ENCODE measurements at regions of chr17 and their contacts with region 1.

Region 1: GRCh38 chr17:35312790-35313711 is 60.4 kb downstream of the SLFN11 start:
- DNase-seq: peak; percentile 67 to 97 (median 76)
- ATAC-seq: peak; percentile 90
- H3K4me3 ChIP-seq: peak overlapping the region; percentile 77
- H3K4me3 Mint-ChIP-seq: peak overlapping the region; percentile 89
- H3K27ac ChIP-seq: peak overlapping the region; percentile 69 to 70
- H3K27ac Mint-ChIP-seq: peak overlapping the region; percentile 96
- H3K4me1 ChIP-seq: peaks cover 30% of the 10 kb centered on the region
- H3K4me1 Mint-ChIP-seq: peaks cover 67% of the 10 kb centered on the region
- H3K27me3 ChIP-seq: no peaks in the 10 kb centered on the region
- H3K27me3 Mint-ChIP-seq: no peaks in the 10 kb centered on the region
- CTCF ChIP-seq: peak; percentile 78

Region 2: GRCh38 chr17:34902831-34903547 is 410.1 kb before region 1 on chr17:
- CTCF ChIA-PET with region 1: no interaction called
- POLR2A ChIA-PET with region 1: no interaction called
- intact Hi-C with region 1: no loop called
- DNase-seq: no peak
- ATAC-seq: no peak
- H3K4me3 ChIP-seq: no peak overlapping the region
- H3K4me3 Mint-ChIP-seq: no peak overlapping the region
- H3K27ac ChIP-seq: no peak overlapping the region
- H3K27ac Mint-ChIP-seq: no peak overlapping the region
- H3K4me1 ChIP-seq: no peaks in the 10 kb centered on the region
- H3K4me1 Mint-ChIP-seq: no peaks in the 10 kb centered on the region
- H3K27me3 ChIP-seq: peaks cover 6 to 11% of the 10 kb centered on the region in 2 experiments
- H3K27me3 Mint-ChIP-seq: peaks cover 58% of the 10 kb centered on the region
- CTCF ChIP-seq: no peak

Region 3: DNA sequence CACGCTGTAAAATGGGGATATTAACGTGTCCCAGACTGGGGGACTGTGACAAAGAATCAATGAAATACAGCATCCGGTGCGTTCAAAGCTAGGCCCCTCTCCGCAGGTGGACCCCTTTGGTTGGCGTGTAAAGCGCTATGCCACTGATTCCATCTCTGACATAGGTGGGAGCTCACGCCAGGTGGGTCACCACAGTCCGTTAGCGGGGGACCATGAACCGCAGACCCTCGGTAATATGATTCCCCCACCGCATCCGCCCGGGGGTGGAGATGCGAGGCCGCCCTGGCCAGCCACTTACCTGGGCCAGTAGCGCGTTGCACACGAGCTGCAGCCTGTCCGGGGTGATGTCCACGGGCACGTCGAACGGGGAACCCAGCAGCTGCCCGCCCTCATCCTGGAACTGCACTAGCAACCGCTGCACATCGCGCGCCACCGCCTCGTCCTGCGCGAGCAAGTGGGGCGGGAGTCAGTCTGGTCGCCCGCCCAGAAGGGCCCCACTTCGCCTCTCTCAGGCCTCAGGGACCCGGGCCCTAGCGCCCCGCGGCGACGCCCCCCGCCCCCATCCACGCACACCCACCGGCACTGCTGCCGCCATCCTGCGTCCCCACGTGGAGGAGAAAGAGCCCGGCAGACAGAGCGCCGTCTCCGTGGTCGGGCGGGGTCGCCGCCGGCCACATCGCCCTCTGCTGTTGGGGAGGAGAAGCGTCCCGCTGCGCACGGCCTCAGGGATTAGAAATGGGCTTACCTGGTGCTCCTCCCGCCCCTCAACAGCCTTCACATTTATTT is 171.2 kb before region 1 on chr17 and contains the start of gene NLE1:
- CTCF ChIA-PET with region 1: no interaction called
- POLR2A ChIA-PET with region 1: no interaction called
- intact Hi-C with region 1: no loop called
- DNase-seq: peak; percentile 84 to 93 (median 88)
- ATAC-seq: peak; percentile 97
- H3K4me3 ChIP-seq: peak within 1 kb of the TSS; percentile 98
- H3K4me3 Mint-ChIP-seq: peak within 1 kb of the TSS; percentile 90
- H3K27ac ChIP-seq: peak within 1 kb of the TSS; percentile 13 to 64
- H3K27ac Mint-ChIP-seq: peak within 1 kb of the TSS; percentile 75
- H3K4me1 ChIP-seq: peaks cover 28% of the 10 kb centered on the region
- H3K4me1 Mint-ChIP-seq: peaks cover 17% of the 10 kb centered on the region
- H3K27me3 ChIP-seq: no peaks in the 10 kb centered on the region
- H3K27me3 Mint-ChIP-seq: no peaks in the 10 kb centered on the region
- CTCF ChIP-seq: peak; percentile 92
- total RNA-seq, gene NLE1: 8.9 to 9.5 TPM

Region 4: DNA sequence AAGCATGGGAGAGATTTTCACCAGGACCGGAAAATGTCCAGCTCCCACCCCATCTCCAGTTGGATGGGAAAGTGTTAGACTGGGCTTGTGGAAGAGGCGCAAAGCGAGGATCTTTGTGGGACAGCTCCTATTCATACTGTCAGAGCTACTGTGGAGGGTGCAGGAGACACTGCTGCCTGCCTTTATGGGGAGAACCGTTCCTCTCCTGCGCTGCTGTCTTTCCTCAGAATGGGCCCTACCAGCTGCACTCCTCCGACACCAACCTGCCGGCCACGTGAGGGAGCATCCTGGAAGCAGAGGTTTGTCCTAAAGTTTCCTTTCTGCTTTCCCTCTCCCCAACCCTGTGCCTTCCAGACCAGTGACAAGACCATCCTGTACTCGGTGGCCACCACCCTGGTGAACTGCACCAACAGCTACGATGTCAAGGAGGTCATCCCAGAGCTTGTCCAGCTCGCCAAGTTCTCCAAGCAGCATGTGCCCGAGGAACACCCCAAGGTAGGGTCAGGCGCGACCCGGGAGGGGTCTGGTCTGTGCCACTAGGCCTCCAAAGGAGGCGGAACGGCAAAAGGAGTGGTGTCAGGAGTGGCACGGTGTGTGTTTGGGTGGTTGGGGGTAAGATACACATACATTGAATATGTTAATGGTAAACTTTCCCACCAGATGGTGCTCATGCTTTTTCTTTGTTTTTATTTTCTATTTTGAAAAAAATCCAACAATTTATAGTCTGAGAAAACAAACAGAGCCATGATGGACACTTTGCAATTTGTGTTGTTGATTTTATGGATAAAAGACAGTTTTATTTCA is 141.9 kb before region 1 on chr17:
- CTCF ChIA-PET with region 1: interaction called, 9 read pairs
- POLR2A ChIA-PET with region 1: interaction called, 6 read pairs
- intact Hi-C with region 1: loop called (anchors 2 kb)
- DNase-seq: peak in 9 of 14 experiments; percentile 13 to 80 (median 42)
- ATAC-seq: peak; percentile 79
- H3K4me3 ChIP-seq: no peak overlapping the region
- H3K4me3 Mint-ChIP-seq: peak overlapping the region; percentile 80
- H3K27ac ChIP-seq: no peak overlapping the region
- H3K27ac Mint-ChIP-seq: peak overlapping the region; percentile 92
- H3K4me1 ChIP-seq: peaks cover 40% of the 10 kb centered on the region
- H3K4me1 Mint-ChIP-seq: peaks cover 52% of the 10 kb centered on the region
- H3K27me3 ChIP-seq: no peaks in the 10 kb centered on the region
- H3K27me3 Mint-ChIP-seq: no peaks in the 10 kb centered on the region
- CTCF ChIP-seq: peak; percentile 68

Region 5: DNA sequence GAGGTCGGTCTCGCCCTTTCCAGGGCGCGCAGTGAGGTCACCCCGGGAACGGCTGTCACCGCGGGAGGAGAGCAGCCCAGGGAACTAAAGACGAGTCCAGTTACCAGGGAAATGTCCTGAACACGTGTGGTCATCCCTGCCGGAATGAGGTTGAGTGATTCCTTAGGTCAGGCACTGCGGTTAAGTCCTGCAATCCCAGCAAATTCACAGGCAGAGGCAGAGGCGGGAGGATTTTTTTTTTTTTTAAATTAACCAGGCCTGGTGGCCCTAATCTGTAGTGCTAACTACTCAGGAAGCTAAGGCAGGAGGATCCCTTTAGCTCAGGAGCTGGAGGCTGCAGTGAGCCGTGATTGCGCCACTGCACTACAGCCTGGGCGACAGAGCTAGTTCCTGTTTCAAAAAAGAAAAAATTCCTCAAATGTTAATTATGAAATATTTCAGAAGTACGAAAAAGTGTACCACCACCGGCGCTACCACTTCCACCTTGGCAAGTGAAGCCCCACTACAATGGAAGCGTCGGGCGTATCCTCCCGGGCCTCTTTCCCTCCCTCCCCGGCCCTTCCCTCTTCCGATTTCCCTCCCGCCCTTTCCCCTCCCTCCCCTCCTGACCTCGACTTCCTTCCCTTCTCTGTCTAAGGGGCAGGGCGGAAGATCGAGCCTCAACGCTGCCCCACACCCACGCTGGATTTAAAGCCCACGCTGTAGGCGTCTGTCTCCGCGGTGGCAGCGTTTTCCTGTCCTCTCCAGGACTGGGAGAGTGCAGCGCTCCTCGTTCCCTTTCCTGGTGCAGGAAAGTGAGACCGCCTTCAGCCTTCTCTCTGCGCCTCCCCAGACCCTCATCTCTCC is 33.1 kb after region 1 on chr17:
- CTCF ChIA-PET with region 1: interaction called, 6 read pairs
- POLR2A ChIA-PET with region 1: interaction called, 10 read pairs
- intact Hi-C with region 1: loop called in 1 of 2 experiments (anchors 2 kb)
- DNase-seq: peak in 7 of 14 experiments; percentile 7 to 70 (median 48)
- ATAC-seq: peak; percentile 71
- H3K4me3 ChIP-seq: peak overlapping the region; percentile 66
- H3K4me3 Mint-ChIP-seq: peak overlapping the region; percentile 93
- H3K27ac ChIP-seq: peak overlapping the region in 1 of 2 donors; percentile 35
- H3K27ac Mint-ChIP-seq: peak overlapping the region; percentile 81
- H3K4me1 ChIP-seq: peaks cover 28% of the 10 kb centered on the region
- H3K4me1 Mint-ChIP-seq: peaks cover 57% of the 10 kb centered on the region
- H3K27me3 ChIP-seq: no peaks in the 10 kb centered on the region
- H3K27me3 Mint-ChIP-seq: no peaks in the 10 kb centered on the region
- CTCF ChIP-seq: no peak

Region 6: DNA sequence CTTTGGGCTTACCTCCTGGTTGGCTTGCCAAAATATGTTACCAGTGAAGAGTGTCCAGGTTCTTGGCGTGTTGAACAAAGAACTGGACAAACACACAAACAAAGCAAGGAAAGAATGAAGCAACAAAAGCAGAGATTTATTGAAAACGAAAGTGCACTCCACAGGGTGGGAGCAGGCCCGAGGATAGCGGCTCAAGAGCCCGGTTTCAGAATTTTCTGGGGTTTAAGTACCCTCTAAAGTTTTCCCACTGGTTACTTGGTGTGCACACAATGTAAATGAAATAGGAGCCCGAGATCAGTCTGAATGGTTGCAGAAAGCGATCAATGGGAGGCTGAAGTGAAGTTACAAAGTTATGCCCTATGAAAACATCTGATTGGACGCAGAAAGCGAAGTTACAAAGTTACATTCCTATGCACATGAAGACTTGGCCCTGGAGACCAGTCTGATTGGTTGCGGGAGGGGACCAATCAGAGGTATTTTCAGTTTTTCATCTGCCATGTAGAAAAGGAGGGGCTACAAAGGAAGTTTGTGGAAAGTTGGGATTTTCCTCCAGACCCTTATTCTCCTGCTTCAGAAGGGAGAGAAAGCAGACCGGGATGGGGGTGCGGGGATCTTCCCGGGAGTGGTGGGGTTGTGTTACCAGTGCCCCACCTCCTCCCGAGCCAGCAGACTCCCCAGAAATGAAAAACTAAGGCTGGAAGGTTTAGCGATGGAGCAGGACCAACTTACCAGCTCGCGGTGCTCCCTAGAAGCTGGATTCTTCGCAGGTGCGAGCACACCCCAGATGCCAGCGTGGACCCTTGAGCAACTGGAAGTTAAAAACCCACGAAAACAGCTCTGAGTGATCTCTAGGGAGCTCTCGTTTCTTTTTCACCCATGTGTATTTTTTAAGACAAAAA is 119.4 kb after region 1 on chr17 and contains the start of gene SLFN12:
- CTCF ChIA-PET with region 1: no interaction called
- POLR2A ChIA-PET with region 1: interaction called, 10 read pairs
- intact Hi-C with region 1: loop called in 1 of 2 experiments (anchors 5 kb)
- DNase-seq: peak in 13 of 14 experiments; percentile 5 to 87 (median 35)
- ATAC-seq: peak; percentile 92
- H3K4me3 ChIP-seq: peak within 1 kb of the TSS; percentile 88
- H3K4me3 Mint-ChIP-seq: peak within 1 kb of the TSS; percentile 99
- H3K27ac ChIP-seq: peak within 1 kb of the TSS; percentile 51 to 57
- H3K27ac Mint-ChIP-seq: peak within 1 kb of the TSS; percentile 85
- H3K4me1 ChIP-seq: peaks cover 38% of the 10 kb centered on the region
- H3K4me1 Mint-ChIP-seq: peaks cover 51% of the 10 kb centered on the region
- H3K27me3 ChIP-seq: no peaks in the 10 kb centered on the region
- H3K27me3 Mint-ChIP-seq: no peaks in the 10 kb centered on the region
- CTCF ChIP-seq: no peak
- total RNA-seq, gene SLFN12: 1.3 to 2.4 TPM

Region 7: DNA sequence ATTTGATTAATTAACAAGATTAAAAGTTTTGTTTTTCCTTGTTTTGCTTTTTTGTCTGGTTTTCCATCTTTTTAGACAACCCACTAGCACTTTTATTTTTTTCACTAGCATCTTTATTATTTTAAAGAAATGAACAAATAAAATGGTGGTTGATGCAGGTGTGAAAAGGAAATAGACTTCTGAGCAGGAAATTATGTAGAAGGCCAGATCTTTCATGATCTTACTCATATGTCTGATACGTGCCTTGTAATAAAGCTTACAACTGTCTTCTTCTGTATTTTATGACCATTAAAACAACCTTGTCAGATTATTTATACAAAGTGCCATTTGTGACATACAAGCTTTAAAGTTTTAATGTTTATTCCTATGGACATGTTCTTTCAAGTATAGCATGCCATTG is 218.1 kb after region 1 on chr17:
- CTCF ChIA-PET with region 1: interaction called, 57 read pairs
- POLR2A ChIA-PET with region 1: interaction called, 84 read pairs
- intact Hi-C with region 1: loop called (anchors 1 kb)
- DNase-seq: peak in 2 of 14 experiments; percentile 37 to 59
- ATAC-seq: peak; percentile 34
- H3K4me3 ChIP-seq: peak overlapping the region; percentile 2
- H3K4me3 Mint-ChIP-seq: peak overlapping the region; percentile 21
- H3K27ac ChIP-seq: peak overlapping the region in 1 of 2 donors; percentile 11
- H3K27ac Mint-ChIP-seq: peak overlapping the region; percentile 80
- H3K4me1 ChIP-seq: peaks cover 37% of the 10 kb centered on the region
- H3K4me1 Mint-ChIP-seq: peaks cover 64% of the 10 kb centered on the region
- H3K27me3 ChIP-seq: no peaks in the 10 kb centered on the region
- H3K27me3 Mint-ChIP-seq: no peaks in the 10 kb centered on the region
- CTCF ChIP-seq: no peak

Region 8: GRCh38 chr17:35559495-35560210 is 246.6 kb after region 1 on chr17:
- CTCF ChIA-PET with region 1: no interaction called
- POLR2A ChIA-PET with region 1: no interaction called
- intact Hi-C with region 1: no loop called
- DNase-seq: no peak
- ATAC-seq: no peak
- H3K4me3 ChIP-seq: no peak overlapping the region
- H3K4me3 Mint-ChIP-seq: no peak overlapping the region
- H3K27ac ChIP-seq: no peak overlapping the region
- H3K27ac Mint-ChIP-seq: no peak overlapping the region
- H3K4me1 ChIP-seq: no peaks in the 10 kb centered on the region
- H3K4me1 Mint-ChIP-seq: no peaks in the 10 kb centered on the region
- H3K27me3 ChIP-seq: peaks cover 0 to 5% of the 10 kb centered on the region in 2 experiments
- H3K27me3 Mint-ChIP-seq: peaks cover 13% of the 10 kb centered on the region
- CTCF ChIP-seq: no peak

Region 9: DNA sequence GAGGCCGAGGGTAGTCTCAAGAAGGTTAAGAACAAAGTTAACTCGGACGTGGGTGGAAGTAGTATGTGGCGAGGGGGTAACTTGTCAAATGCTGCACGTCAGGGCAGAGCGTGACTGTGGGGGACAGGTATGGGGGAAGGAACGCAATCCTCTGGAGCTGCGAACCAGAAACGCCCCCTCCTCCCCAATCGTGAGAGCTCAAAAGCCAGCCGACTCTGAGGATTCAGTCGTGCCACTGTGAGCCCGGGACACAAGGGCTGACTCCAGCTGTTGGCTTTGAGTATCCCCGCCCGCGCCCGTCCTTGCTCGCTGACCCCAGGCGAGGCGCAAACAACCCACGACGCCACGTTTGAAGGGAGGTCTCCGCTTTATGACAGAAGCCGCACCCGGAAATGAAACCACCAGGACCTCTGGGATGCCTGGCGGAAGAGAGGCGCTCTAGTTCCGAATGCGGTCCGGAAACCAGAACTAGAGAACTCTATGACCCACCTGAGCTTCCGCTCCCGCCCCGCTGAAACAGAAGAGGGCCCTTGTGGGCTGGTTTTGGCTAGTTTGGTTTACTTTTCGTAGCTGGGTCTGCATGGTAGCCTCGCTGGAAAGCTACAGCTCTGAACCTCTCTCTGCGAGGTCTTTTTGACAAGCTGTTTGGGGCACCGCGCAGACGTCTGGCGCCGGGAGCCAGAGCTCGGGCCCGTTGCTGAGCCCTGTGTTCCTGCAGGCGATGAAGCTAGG is 265.3 kb after region 1 on chr17 and contains the start of gene PEX12:
- CTCF ChIA-PET with region 1: interaction called, 10 read pairs
- POLR2A ChIA-PET with region 1: interaction called, 23 read pairs
- intact Hi-C with region 1: no loop called
- DNase-seq: peak; percentile 77 to 96 (median 86)
- ATAC-seq: peak; percentile 96
- H3K4me3 ChIP-seq: peak within 1 kb of the TSS; percentile 85
- H3K4me3 Mint-ChIP-seq: peak within 1 kb of the TSS; percentile 92
- H3K27ac ChIP-seq: peak within 1 kb of the TSS; percentile 90 to 93
- H3K27ac Mint-ChIP-seq: peak within 1 kb of the TSS; percentile 97
- H3K4me1 ChIP-seq: peaks cover 21% of the 10 kb centered on the region
- H3K4me1 Mint-ChIP-seq: peaks cover 42% of the 10 kb centered on the region
- H3K27me3 ChIP-seq: no peaks in the 10 kb centered on the region
- H3K27me3 Mint-ChIP-seq: no peaks in the 10 kb centered on the region
- CTCF ChIP-seq: no peak
- total RNA-seq, gene PEX12: 3.0 to 3.2 TPM

Measured in CD4-positive, alpha-beta T cell (primary cell).